ENCODE measurements at regions of chr17 and their contacts with region 1.

Region 1: GRCh38 chr17:38868817-38869525 is 887 bp upstream of the LASP1 start:
- DNase-seq: peak; percentile 71 to 91 (median 80)
- H3K4me3 ChIP-seq: peak overlapping the region; percentile 98
- H3K4me3 Mint-ChIP-seq: peak overlapping the region; percentile 94 to 100 (median 98)
- H3K27ac ChIP-seq: peak overlapping the region; percentile 87
- H3K27ac Mint-ChIP-seq: peak overlapping the region; percentile 89 to 99 (median 96)
- H3K4me1 ChIP-seq: peaks cover 42% of the 10 kb centered on the region
- H3K4me1 Mint-ChIP-seq: peaks cover 46 to 47% (median 47%) of the 10 kb centered on the region in 3 donors
- H3K27me3 ChIP-seq: no peaks in the 10 kb centered on the region
- H3K27me3 Mint-ChIP-seq: peaks cover 0 to 12% of the 10 kb centered on the region in 2 donors

Region 2: GRCh38 chr17:38702166-38702899 is 166.6 kb before region 1 on chr17:
- CTCF ChIA-PET with region 1: interaction called, 3 read pairs
- POLR2A ChIA-PET with region 1: interaction called, 14 read pairs
- DNase-seq: peak; percentile 76 to 86 (median 77)
- H3K4me3 ChIP-seq: peak overlapping the region; percentile 93
- H3K4me3 Mint-ChIP-seq: peak overlapping the region; percentile 92 to 99 (median 94)
- H3K27ac ChIP-seq: peak overlapping the region; percentile 90
- H3K27ac Mint-ChIP-seq: peak overlapping the region; percentile 93 to 100 (median 98)
- H3K4me1 ChIP-seq: peaks cover 32% of the 10 kb centered on the region
- H3K4me1 Mint-ChIP-seq: peaks cover 30 to 44% (median 40%) of the 10 kb centered on the region in 3 donors
- H3K27me3 ChIP-seq: no peaks in the 10 kb centered on the region
- H3K27me3 Mint-ChIP-seq: no peaks in the 10 kb centered on the region

Region 3: DNA sequence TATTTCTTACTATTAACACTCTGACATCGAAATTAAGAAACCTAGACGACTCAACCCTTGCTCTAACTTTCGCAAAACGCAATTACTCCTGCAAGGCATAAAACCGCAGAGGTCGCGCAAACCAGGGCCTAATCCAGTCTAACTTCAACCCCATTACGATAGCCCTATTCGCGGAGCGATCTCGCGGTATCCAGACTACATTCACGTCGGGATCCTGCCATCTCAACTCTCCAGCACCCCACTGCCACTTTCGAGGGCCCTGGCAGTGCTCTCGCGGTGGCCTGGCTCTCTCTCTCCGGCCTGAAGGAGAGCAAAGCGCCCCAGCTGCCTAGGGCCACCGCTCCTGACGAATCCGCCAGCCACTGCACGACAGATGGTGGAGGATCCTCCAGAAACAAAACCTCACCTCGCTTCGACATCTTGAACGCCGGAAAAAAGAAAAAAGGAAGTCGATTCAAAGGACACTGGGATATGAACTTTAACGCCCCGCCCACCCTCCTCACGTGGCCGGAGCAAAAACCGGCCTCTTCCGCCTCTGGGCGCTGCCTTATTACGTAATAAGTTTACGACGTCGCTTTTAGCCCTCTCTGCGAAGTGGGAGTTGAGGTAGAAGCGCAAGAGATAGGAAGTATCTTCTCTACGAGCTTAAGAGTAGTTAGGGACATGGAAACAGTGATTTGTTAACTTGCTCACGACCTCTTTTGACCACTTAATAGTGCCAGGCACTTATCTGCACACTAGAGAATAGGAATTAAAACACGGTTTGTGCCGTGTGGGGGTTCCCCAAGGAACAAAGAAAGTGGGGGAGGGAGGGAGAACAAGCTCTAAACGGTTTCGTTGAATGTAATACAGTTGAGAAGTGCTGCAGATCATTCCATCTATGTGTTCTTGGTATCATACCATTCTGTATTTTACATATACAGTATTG is 15.4 kb before region 1 on chr17 and contains the start of gene RPL23:
- CTCF ChIA-PET with region 1: interaction called, 19 read pairs
- POLR2A ChIA-PET with region 1: interaction called, 57 read pairs
- DNase-seq: peak; percentile 82 to 93 (median 90)
- H3K4me3 ChIP-seq: peak within 1 kb of the TSS; percentile 90
- H3K4me3 Mint-ChIP-seq: peak within 1 kb of the TSS; percentile 88 to 97 (median 92)
- H3K27ac ChIP-seq: peak within 1 kb of the TSS; percentile 94
- H3K27ac Mint-ChIP-seq: peak within 1 kb of the TSS; percentile 96 to 100 (median 99)
- H3K4me1 ChIP-seq: peaks cover 36% of the 10 kb centered on the region
- H3K4me1 Mint-ChIP-seq: peaks cover 41 to 46% (median 42%) of the 10 kb centered on the region in 3 donors
- H3K27me3 ChIP-seq: no peaks in the 10 kb centered on the region
- H3K27me3 Mint-ChIP-seq: no peaks in the 10 kb centered on the region
- total RNA-seq, gene RPL23: 1,857 to 1,911 TPM

Region 4: DNA sequence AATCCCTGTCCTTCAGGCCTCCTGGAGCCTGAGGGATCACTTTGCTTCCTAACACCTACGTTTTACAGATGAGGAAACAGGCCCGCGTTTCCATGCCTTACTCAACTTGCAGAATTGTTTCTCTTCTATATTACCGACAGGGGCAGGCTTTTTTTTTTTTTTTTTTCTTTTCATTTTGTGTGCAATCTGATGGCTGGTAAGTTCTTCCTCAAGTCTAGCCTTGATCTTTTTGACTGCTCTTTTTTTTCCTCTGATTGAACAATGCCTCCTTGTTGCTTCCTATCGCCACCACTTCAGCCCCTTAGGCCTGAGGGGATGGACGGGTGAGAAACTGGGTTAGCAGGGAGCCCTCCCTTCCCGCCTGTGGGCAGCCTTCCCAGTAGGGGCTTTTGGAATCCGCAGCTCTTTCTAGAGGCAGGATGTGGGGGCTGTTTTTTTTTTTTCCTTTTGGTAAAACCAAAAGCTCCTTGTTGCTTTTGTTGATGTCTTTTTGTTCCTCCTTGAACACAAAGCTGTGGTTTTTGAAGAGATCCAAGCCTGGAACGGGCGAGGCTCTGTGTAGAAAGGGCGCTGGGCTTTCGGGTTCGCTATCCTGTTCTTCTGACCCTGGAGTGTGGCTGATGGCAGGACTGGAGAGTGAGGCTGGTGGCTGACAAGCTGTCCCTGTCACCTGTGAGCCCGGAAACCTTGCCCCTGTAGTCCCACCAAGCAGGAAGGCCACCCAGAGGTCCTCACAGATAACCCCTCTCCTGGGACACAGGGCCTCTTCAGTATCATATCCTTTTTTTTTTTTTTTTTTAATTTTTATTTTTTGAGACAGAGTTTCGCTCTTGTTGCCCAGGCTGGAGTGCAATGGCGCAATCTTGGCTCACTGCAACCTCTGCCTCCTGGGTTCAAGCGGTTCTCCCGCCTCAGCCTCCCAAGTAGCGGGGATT is 14.9 kb after region 1 on chr17:
- CTCF ChIA-PET with region 1: interaction called, 7 read pairs
- POLR2A ChIA-PET with region 1: interaction called, 18 read pairs
- DNase-seq: no peak
- H3K4me3 ChIP-seq: peak overlapping the region; percentile 20
- H3K4me3 Mint-ChIP-seq: peak overlapping the region; percentile 65 to 76 (median 73)
- H3K27ac ChIP-seq: peak overlapping the region; percentile 20
- H3K27ac Mint-ChIP-seq: peak overlapping the region; percentile 71 to 98 (median 86)
- H3K4me1 ChIP-seq: peaks cover 97% of the 10 kb centered on the region
- H3K4me1 Mint-ChIP-seq: peaks cover 84 to 94% (median 91%) of the 10 kb centered on the region in 3 donors
- H3K27me3 ChIP-seq: no peaks in the 10 kb centered on the region
- H3K27me3 Mint-ChIP-seq: no peaks in the 10 kb centered on the region

Region 5: DNA sequence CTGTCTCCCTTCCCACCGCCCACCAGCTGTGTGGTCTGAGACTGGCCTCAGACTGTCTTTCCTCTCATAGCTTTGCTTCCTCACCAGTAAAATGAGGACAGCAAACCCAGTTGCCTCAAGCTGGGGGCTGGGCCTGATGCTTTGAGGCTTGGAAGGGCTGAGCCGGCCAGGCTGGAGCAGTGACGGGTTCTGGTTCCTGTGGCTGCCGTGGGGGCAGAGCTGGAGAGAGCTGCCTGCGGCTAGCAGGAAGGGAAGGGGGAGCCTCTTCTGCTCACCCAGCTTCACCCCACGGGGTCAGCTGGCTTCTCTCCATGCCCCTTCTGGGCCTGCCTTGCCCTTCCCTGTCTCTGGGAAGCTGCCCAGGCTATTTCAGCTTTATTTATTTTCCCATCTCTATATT is 24.6 kb after region 1 on chr17:
- CTCF ChIA-PET with region 1: interaction called, 73 read pairs
- POLR2A ChIA-PET with region 1: interaction called, 49 read pairs
- DNase-seq: peak in 3 of 5 donors; percentile 36 to 65 (median 44)
- H3K4me3 ChIP-seq: no peak overlapping the region
- H3K4me3 Mint-ChIP-seq: peak overlapping the region; percentile 34 to 73 (median 50)
- H3K27ac ChIP-seq: no peak overlapping the region
- H3K27ac Mint-ChIP-seq: peak overlapping the region; percentile 65 to 99 (median 89)
- H3K4me1 ChIP-seq: peaks cover 90% of the 10 kb centered on the region
- H3K4me1 Mint-ChIP-seq: peaks cover 79 to 91% (median 90%) of the 10 kb centered on the region in 3 donors
- H3K27me3 ChIP-seq: no peaks in the 10 kb centered on the region
- H3K27me3 Mint-ChIP-seq: no peaks in the 10 kb centered on the region

Region 6: DNA sequence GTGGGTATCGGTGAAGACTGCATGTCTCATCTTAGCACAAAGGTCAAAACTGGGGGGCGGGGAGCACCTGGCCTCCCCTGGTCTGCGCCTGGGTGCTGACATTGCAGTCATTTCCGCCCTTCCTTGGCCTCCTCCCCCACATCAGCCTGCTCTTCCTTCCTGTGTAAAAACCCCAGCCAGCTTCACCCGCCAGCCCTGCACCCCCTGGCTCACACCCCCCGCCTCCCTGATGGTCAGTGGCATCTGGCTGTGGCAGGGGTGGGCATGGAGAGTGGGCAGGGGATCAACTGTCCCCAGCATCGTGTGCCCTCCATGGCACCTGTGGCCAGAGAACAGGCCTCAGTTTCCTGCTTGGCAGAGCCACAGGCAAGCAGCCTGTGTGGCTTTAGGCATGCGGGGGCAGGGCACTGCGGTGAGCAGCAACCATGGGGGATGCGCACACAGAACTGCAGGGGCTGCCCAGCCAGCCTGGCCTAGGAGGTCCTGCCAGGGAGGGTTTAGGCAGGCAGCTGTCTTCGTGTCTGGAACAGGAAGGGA is 29.9 kb after region 1 on chr17:
- CTCF ChIA-PET with region 1: interaction called, 73 read pairs
- POLR2A ChIA-PET with region 1: interaction called, 49 read pairs
- DNase-seq: peak; percentile 73 to 92 (median 84)
- H3K4me3 ChIP-seq: peak overlapping the region; percentile 60
- H3K4me3 Mint-ChIP-seq: peak overlapping the region; percentile 51 to 92 (median 77)
- H3K27ac ChIP-seq: peak overlapping the region; percentile 66
- H3K27ac Mint-ChIP-seq: peak overlapping the region; percentile 93 to 99 (median 96)
- H3K4me1 ChIP-seq: peaks cover 84% of the 10 kb centered on the region
- H3K4me1 Mint-ChIP-seq: peaks cover 72 to 81% (median 78%) of the 10 kb centered on the region in 3 donors
- H3K27me3 ChIP-seq: no peaks in the 10 kb centered on the region
- H3K27me3 Mint-ChIP-seq: no peaks in the 10 kb centered on the region

Region 7: GRCh38 chr17:38922538-38923297 is 53.7 kb after region 1 on chr17:
- CTCF ChIA-PET with region 1: interaction called, 52 read pairs
- POLR2A ChIA-PET with region 1: interaction called, 10 read pairs
- DNase-seq: no peak
- H3K4me3 ChIP-seq: no peak overlapping the region
- H3K4me3 Mint-ChIP-seq: no peak overlapping the region
- H3K27ac ChIP-seq: no peak overlapping the region
- H3K27ac Mint-ChIP-seq: peak overlapping the region in 3 of 8 donors; percentile 15 to 35 (median 30)
- H3K4me1 ChIP-seq: peaks cover 24% of the 10 kb centered on the region
- H3K4me1 Mint-ChIP-seq: peaks cover 35 to 48% (median 36%) of the 10 kb centered on the region in 3 donors
- H3K27me3 ChIP-seq: no peaks in the 10 kb centered on the region
- H3K27me3 Mint-ChIP-seq: peaks cover 0 to 2% of the 10 kb centered on the region in 2 donors

Region 8: GRCh38 chr17:39000021-39000601 is 131.1 kb after region 1 on chr17:
- CTCF ChIA-PET with region 1: no interaction called
- POLR2A ChIA-PET with region 1: no interaction called
- DNase-seq: no peak
- H3K4me3 ChIP-seq: no peak overlapping the region
- H3K4me3 Mint-ChIP-seq: no peak overlapping the region
- H3K27ac ChIP-seq: no peak overlapping the region
- H3K27ac Mint-ChIP-seq: no peak overlapping the region
- H3K4me1 ChIP-seq: peaks cover 25% of the 10 kb centered on the region
- H3K4me1 Mint-ChIP-seq: peaks cover 9 to 22% (median 14%) of the 10 kb centered on the region in 3 donors
- H3K27me3 ChIP-seq: no peaks in the 10 kb centered on the region
- H3K27me3 Mint-ChIP-seq: peaks cover 8 to 29% of the 10 kb centered on the region in 2 donors

Measured in CD8-positive, alpha-beta memory T cell (primary cell).